Dendritic cell treated with granulocyte-macrophage colony-stimulating factor and Interleukin-4, amounts not matched to agents 40 ng/mL and 50 ng/mL, for 4 days (primary cell): ENCODE measurements at regions of chr20 and their contacts with region 1.

Region 1: GRCh38 chr20:1894951-1895673 is at the start of gene SIRPA:
- H3K4me3 Mint-ChIP-seq: peak within 1 kb of the TSS; percentile 97
- H3K27ac Mint-ChIP-seq: peak within 1 kb of the TSS; percentile 98
- H3K4me1 Mint-ChIP-seq: peaks cover 81% of the 10 kb centered on the region
- H3K27me3 Mint-ChIP-seq: peaks cover 1% of the 10 kb centered on the region

Region 2: DNA sequence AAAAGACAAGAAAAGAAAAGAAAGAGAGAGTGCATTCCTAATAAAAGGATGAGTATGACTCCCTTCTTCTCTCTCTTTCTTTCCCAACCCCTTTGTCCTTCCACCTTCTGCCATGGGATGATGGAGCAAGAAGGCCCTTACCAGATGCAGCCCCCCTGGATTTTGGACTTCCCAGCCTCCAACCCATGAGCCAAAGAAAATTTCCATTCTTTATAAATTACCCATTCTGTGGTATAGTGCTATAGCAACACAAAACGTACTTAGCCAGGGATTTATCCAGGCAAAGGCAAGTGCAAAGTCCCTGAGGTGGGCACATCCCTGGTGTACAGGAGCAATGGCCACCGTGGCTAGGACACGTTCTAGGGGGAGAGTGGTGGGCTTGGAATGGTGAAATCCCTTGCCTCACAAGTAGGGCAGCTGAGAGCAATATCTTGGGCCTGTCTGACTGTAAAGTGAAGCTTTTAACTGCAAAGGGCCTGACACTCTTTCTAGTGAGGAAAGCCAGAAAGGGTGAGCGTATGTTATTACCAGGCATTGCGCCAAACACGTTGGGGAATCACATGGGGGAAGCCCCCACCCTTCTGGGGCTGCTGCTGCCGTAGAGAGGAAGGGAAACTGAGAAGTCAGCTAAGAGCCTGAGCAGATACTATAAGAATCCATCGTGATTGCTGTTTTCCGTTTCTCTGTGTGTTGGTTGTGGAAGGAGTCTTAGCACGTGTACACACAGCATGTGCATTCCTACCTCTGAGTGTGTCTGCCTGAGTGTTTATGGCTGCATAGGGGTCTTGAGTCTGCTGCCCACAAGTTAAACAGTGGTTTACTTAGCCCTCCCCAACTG is 50.6 kb before region 1 on chr20:
- intact Hi-C with region 1: loop called (anchors 5 kb)
- H3K4me3 Mint-ChIP-seq: no peak overlapping the region
- H3K27ac Mint-ChIP-seq: peak overlapping the region; percentile 65
- H3K4me1 Mint-ChIP-seq: peaks cover 95% of the 10 kb centered on the region
- H3K27me3 Mint-ChIP-seq: peaks cover 8% of the 10 kb centered on the region

Region 3: GRCh38 chr20:1857466-1857865 is 37.6 kb before region 1 on chr20:
- intact Hi-C with region 1: loop called (anchors 5 kb)
- H3K4me3 Mint-ChIP-seq: no peak overlapping the region
- H3K27ac Mint-ChIP-seq: no peak overlapping the region
- H3K4me1 Mint-ChIP-seq: peaks cover 69% of the 10 kb centered on the region
- H3K27me3 Mint-ChIP-seq: peaks cover 10% of the 10 kb centered on the region